ENCODE measurements at regions of chr2 and their contacts with region 1.

Region 1: GRCh38 chr2:224145751-224146355 is 106.8 kb upstream of the SERPINE2 start:
- DNase-seq: peak; percentile 94
- H3K4me3 ChIP-seq: no peak overlapping the region
- H3K27ac ChIP-seq: peak overlapping the region; percentile 70
- H3K4me1 ChIP-seq: peaks cover 39% of the 10 kb centered on the region
- H3K27me3 ChIP-seq: peaks cover 2 to 3% of the 10 kb centered on the region in 2 experiments
- CTCF ChIP-seq: no peak
- POLR2A ChIP-seq: no peak

Region 2: GRCh38 chr2:223727562-223727961 is 418.3 kb before region 1 on chr2:
- CTCF ChIA-PET with region 1: no interaction called
- POLR2A ChIA-PET with region 1: no interaction called
- dilution Hi-C with region 1: no loop called
- intact Hi-C with region 1: loop called (anchors 5 kb)
- DNase-seq: peak; percentile 60
- H3K4me3 ChIP-seq: no peak overlapping the region
- H3K27ac ChIP-seq: peak overlapping the region; percentile 14
- H3K4me1 ChIP-seq: peaks cover 30% of the 10 kb centered on the region
- H3K27me3 ChIP-seq: no peaks in the 10 kb centered on the region
- CTCF ChIP-seq: peak; percentile 38 to 48
- POLR2A ChIP-seq: no peak

Region 3: DNA sequence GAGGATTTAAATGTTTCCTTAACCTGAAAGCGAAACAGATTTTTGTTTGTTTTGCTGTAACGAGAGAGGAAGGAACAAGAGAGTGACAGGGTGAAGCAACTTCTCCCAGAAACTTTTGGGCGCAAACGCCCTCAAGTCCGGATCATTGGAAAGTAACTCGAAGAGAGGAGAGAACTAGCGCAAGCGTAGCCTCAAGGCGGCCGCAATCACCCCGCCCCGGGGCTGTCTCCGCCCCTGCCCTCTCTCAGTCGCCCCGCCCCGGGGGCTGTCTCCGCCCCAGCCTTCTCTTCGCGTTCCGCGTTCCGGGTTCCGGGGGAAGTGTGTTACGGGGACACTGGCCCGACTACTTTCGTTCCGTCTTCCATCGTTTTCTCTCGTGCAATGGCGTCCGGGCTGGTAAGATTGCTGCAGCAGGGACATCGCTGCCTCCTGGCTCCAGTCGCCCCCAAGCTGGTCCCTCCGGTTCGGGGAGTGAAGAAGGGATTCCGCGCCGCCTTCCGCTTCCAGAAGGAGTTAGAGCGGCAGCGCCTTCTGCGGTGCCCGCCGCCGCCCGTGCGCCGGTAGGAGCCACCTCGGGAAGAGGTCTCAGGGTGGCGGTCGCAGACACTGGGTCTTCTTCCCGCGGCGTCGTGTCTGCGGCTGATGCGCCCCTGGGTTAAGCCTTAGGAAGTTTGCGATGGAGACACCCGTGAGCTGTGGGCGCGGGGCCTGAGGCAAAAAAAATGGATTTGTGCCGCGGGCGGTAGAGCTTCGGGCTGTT is 188.6 kb before region 1 on chr2 and contains the start of gene MRPL44:
- CTCF ChIA-PET with region 1: no interaction called
- POLR2A ChIA-PET with region 1: no interaction called
- dilution Hi-C with region 1: no loop called
- intact Hi-C with region 1: loop called (anchors 5 kb)
- DNase-seq: peak; percentile 95
- H3K4me3 ChIP-seq: peak within 1 kb of the TSS; percentile 89 to 99 (median 95)
- H3K27ac ChIP-seq: peak within 1 kb of the TSS; percentile 58
- H3K4me1 ChIP-seq: peaks cover 38% of the 10 kb centered on the region
- H3K27me3 ChIP-seq: no peaks in the 10 kb centered on the region
- CTCF ChIP-seq: no peak
- POLR2A ChIP-seq: peak; percentile 90
- total RNA-seq, gene MRPL44: 27.7 and 31.5 TPM in 2 replicates

Region 4: DNA sequence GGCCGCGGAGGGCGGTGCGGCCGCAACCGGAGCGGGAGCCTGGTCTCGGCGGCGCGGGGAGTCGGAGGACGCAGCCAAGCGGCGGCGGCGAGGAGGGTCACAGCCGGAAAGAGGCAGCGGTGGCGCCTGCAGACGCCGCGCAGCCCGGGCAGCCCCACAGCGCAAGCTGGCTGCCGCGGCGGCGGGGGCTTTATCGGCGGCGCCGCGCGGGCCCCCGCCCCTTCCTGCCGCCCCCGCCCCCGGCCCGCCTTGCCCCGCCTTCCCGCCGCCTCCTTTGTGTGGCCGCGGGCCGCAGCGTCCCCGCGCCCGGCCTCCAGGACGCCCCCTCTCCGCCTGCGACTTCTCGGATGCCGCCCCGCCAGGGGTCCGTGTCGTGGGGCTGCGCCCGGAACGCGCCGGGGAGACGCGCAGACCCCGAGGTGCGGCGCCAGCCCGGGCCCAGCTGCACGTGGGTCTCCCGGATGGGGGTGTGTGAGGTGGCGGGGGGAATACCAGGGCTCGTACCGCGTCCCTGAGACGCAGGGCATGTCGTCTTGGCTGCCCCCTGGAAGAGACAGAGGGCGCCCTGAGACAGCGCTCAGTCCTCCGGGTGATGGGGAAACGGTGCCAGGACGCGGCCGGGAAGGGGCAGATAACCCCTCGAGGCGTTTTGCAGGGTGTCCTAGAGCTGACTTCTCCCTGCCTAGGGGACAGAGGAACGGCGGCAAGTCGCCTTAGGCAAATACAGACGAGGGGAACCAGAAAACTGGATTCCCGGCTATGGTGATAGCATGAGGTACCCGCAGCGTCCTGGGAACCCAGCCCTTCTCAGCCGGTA is 106.5 kb before region 1 on chr2 and contains the start of gene SERPINE2:
- CTCF ChIA-PET with region 1: no interaction called
- POLR2A ChIA-PET with region 1: no interaction called
- dilution Hi-C with region 1: no loop called
- intact Hi-C with region 1: loop called (anchors 1 kb)
- DNase-seq: peak; percentile 41
- H3K4me3 ChIP-seq: peak within 1 kb of the TSS; percentile 32 to 73 (median 41)
- H3K27ac ChIP-seq: no peak within 1 kb of the TSS
- H3K4me1 ChIP-seq: peaks cover 6% of the 10 kb centered on the region
- H3K27me3 ChIP-seq: peaks cover 29 to 41% of the 10 kb centered on the region in 2 experiments
- CTCF ChIP-seq: no peak
- POLR2A ChIP-seq: no peak
- total RNA-seq, gene SERPINE2: 8.8 and 15.5 TPM in 2 replicates

Region 5: GRCh38 chr2:224062481-224063297 is 83.2 kb before region 1 on chr2:
- CTCF ChIA-PET with region 1: no interaction called
- POLR2A ChIA-PET with region 1: no interaction called
- dilution Hi-C with region 1: no loop called
- intact Hi-C with region 1: no loop called
- DNase-seq: no peak
- H3K4me3 ChIP-seq: no peak overlapping the region
- H3K27ac ChIP-seq: no peak overlapping the region
- H3K4me1 ChIP-seq: no peaks in the 10 kb centered on the region
- H3K27me3 ChIP-seq: no peaks in the 10 kb centered on the region
- CTCF ChIP-seq: no peak
- POLR2A ChIP-seq: no peak

Region 6: DNA sequence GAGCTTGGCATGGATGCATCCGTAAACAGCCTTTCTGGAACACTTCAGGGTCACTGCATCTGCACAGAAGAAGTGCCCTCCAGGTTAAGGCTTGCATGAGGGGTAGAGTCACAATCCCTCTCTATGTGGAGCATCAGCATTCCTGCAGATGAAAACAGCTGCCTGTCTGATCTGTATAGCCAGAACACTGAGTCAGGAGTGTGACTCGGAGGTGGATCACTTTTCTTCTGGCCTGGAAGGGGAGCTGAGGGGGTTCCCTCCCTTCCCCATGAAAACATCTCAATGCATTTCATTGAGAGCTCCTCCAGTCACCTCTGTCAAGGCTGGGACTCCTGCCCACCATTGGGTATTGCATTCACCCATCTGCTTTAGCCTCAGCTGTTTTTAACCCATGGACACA is 34.3 kb before region 1 on chr2:
- CTCF ChIA-PET with region 1: no interaction called
- POLR2A ChIA-PET with region 1: no interaction called
- dilution Hi-C with region 1: no loop called
- intact Hi-C with region 1: no loop called
- DNase-seq: no peak
- H3K4me3 ChIP-seq: no peak overlapping the region
- H3K27ac ChIP-seq: no peak overlapping the region
- H3K4me1 ChIP-seq: no peaks in the 10 kb centered on the region
- H3K27me3 ChIP-seq: peaks cover 0 to 2% of the 10 kb centered on the region in 2 experiments
- CTCF ChIP-seq: no peak
- POLR2A ChIP-seq: no peak

Region 7: DNA sequence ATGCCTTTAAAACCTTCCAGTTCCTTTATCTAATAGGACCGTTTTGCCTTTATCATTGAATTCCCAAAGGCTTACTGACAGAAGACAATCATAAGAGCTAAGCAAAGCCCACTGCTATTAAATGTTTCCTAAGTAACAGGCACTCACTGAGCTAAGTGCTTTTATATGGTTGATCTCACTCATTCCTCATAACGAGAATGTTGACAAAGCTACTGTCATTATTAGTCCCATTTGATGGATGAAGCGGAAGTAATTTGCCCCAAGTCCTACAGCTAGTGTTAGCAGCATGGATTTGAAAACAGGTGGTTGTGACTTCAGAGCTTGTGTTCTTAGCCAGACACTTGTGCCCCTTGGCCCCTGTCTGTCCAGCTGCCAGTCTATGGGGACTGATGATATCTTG is 28.1 kb after region 1 on chr2:
- CTCF ChIA-PET with region 1: no interaction called
- POLR2A ChIA-PET with region 1: no interaction called
- dilution Hi-C with region 1: no loop called
- intact Hi-C with region 1: loop called (anchors 1 kb)
- DNase-seq: no peak
- H3K4me3 ChIP-seq: no peak overlapping the region
- H3K27ac ChIP-seq: no peak overlapping the region
- H3K4me1 ChIP-seq: peaks cover 31% of the 10 kb centered on the region
- H3K27me3 ChIP-seq: peaks cover 0 to 2% of the 10 kb centered on the region in 2 experiments
- CTCF ChIP-seq: no peak
- POLR2A ChIP-seq: no peak

Region 8: DNA sequence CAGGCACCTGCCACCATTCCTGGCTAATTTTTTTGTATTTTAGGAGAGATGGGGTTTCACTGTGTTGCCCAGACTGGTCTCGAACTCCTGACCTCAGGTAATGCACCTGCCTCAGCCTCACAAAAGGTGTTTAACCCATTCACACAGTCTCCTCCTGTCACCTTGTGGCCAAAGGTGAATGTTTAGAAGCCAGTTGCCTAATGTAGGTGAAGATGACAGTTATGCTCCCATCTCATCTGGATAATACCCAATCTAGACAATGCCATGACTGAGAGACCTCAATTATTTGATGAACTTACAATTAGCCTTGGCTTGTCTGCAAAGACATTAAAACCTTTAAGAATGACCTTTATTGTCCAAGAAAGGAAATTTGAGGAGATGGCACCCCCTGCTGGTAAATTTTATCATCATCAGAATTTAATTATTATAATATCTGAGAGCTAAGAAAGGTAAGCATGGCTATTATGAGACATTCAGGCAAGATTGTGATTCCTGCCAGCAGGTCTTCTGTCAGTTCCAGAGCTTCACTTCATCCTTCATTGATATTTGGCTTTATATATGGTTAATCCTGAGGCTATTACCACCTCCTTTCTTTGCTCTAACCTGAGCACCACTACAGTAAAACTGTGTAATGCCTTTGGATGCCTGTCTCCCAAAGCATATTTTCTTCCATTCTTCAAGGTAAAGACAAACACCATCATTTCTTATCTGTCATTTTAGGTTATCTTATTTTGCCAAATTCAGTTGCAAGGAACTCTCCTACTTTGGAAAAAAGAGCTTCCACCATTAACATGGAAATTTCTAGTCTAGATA is 138.5 kb after region 1 on chr2:
- CTCF ChIA-PET with region 1: interaction called, 12 read pairs
- POLR2A ChIA-PET with region 1: no interaction called
- dilution Hi-C with region 1: no loop called
- intact Hi-C with region 1: loop called (anchors 1 kb)
- DNase-seq: peak; percentile 60
- H3K4me3 ChIP-seq: no peak overlapping the region
- H3K27ac ChIP-seq: no peak overlapping the region
- H3K4me1 ChIP-seq: no peaks in the 10 kb centered on the region
- H3K27me3 ChIP-seq: peaks cover 6 to 10% of the 10 kb centered on the region in 2 experiments
- CTCF ChIP-seq: peak; percentile 12 to 14
- POLR2A ChIP-seq: no peak